Left cardiac atrium (tissue), 4 donors: ENCODE measurements at regions of chr4 and their contacts with region 1.

Region 1: DNA sequence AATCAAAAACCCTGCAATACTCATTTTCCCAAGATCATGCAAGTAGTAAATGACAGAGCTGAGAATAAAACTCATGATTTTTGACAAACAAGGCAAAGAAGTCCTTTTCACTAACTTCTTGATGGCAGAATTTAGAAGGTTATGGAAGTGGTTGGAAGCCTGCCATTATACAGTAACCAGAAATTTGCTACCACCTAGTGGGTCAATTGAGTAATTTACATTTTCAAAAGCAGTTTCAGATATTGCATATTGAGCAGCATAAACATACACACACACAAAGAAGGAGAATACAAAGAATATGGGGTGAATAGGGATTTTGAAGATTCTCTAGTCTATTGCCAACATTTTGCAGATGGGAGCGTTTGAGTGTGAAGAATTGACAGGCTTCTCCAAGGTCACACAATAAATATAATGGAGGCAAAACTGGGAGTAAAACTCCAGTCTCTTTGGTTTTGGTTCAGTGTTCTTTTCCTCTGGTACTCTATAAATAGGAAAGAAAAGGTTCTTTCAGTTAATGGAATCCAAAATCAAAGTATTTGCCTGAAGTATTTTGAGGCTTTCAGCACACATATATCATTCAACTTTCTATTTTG is 70.2 kb downstream of the GC start:
- DNase-seq: no peak
- ATAC-seq: peak in 1 of 2 donors; percentile 57

Region 2: DNA sequence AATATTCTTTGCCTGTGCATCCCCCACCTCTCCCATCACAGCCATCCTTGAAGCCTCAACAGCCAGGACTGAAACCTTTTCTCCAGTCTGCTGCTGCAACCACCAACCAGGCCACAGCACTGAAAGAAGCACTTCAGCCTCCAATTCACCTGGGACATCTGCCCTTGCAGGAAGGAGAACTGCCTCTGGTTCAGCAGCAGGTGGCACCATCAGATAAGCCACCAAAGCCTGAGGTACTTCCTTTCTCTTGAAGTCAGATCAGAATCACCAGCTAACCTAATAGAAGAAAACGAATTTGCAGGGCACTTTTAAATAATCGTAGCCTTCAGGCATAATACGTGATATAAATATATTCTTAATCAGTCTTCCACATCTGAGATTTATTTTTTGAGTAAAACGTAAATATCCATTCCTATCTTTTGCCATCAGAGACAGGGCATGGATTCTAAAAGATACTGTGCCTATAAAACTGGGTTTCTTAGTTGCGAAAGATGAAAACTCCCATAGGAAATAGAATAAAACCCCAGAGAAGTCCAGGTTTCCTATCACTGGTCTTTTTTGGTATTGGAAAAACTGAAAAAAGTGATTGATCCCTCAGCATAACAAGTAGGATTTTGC is 1112.2 kb before region 1 on chr4:
- intact Hi-C with region 1: loop called in 1 of 2 experiments (anchors 10 kb)
- DNase-seq: peak; percentile 21
- ATAC-seq: peak; percentile 54 to 61

Region 3: GRCh38 chr4:70651864-70652506 is 1061.7 kb before region 1 on chr4:
- intact Hi-C with region 1: loop called in 1 of 2 experiments (anchors 10 kb)
- DNase-seq: no peak
- ATAC-seq: peak; percentile 19 to 55

Region 4: DNA sequence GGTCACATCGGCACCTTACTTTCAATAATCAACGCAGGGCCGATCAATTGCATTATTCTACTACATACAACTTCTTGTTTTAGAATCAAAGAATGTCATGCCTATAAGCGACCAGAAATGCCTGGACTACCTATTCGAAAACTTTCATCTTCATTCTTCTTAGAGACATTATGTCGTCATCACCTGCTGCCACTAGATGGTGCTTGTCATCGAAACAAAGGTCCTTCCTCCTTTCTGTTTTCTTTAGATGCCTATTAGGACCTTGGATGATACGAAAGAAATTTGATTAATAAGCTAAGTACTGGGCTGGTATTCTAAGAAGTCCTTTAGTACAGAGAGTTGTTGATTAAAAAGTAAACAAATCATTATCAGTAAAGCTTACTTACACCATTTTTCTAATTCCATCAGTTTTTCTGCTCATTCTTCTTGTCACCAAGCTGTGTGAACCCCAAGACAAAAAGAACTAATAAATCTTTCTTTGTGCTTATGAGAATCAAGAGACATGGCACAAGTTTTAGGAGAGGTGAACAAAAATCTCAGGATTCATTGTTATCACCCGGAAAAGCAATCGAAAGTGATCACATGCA is 529.4 kb before region 1 on chr4:
- intact Hi-C with region 1: loop called in 1 of 2 experiments (anchors 5 kb)
- DNase-seq: peak; percentile 22
- ATAC-seq: no peak

Region 5: GRCh38 chr4:71229477-71230270 is 484.0 kb before region 1 on chr4:
- intact Hi-C with region 1: loop called in 1 of 2 experiments (anchors 5 kb)
- DNase-seq: no peak
- ATAC-seq: peak; percentile 35 to 45

Region 6: GRCh38 chr4:71322425-71322824 is 391.3 kb before region 1 on chr4:
- intact Hi-C with region 1: no loop called
- DNase-seq: no peak
- ATAC-seq: peak; percentile 63 to 89

Region 7: GRCh38 chr4:72006586-72006985 is 292.9 kb after region 1 on chr4:
- intact Hi-C with region 1: no loop called
- DNase-seq: no peak
- ATAC-seq: peak in 1 of 2 donors; percentile 42